ENCODE measurements at regions of chr19 and their contacts with region 1.

Region 1: DNA sequence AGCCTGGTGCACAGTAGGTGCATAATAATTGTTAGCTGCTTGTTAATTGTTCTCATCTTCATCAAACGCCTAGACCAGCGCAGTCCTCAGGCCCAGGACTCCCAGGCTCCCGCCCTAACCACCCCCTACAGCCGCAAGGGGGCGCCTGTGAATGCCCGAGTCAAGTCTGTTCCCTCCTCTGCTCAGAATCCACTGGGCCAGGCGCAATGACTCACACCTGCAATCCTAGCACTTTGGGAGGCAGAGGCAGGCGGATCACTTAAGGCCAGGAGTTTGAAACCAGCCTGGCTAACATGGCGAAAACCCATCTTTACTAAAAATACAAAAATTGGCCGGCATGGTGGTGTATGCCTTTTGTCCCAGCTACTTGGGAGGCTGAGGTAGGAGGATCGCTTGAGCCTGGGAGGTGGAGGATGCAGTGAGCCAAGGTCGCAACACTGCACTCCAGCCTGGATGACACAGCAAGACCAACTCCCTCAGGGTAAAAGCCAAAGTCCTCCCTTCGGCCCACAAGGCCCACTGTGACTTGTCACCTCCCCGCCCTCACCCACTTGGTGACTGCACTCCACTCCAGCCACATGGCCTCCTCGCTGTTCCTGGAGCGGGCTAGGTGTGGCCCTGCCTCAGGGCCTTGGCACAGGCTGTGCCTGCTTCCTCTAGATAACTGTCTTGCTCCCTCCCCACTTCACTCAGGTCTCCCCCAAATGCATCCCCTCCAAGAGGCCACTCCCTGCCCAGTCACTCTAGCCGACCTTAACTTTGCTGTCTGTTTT is 9.1 kb downstream of the ZNF653 start:
- DNase-seq: peak; percentile 17 to 82
- H3K4me3 ChIP-seq: no peak overlapping the region
- H3K27ac ChIP-seq: no peak overlapping the region
- H3K4me1 ChIP-seq: no peaks in the 10 kb centered on the region
- H3K27me3 ChIP-seq: no peaks in the 10 kb centered on the region
- CTCF ChIP-seq: peak; percentile 57 to 62 (median 61)

Region 2: GRCh38 chr19:11587302-11587974 is 90.9 kb after region 1 on chr19:
- intact Hi-C with region 1: loop called (anchors 1 kb)
- DNase-seq: peak in 1 of 2 donors; percentile 82
- H3K4me3 ChIP-seq: no peak overlapping the region
- H3K27ac ChIP-seq: no peak overlapping the region
- H3K4me1 ChIP-seq: peaks cover 0 to 2% of the 10 kb centered on the region in 2 donors
- H3K27me3 ChIP-seq: no peaks in the 10 kb centered on the region
- CTCF ChIP-seq: peak; percentile 88 to 91 (median 89)